ENCODE measurements at regions of chr16 and their contacts with region 1.

Region 1: GRCh38 chr16:11396241-11397048 is 51.2 kb downstream of the RMI2 start:
- DNase-seq: peak; percentile 71

Region 2: GRCh38 chr16:12067714-12068401 is 671.4 kb after region 1 on chr16:
- in situ Hi-C with region 1: loop called (anchors 25 kb)
- DNase-seq: peak; percentile 68